Dendritic cell treated with granulocyte-macrophage colony-stimulating factor and Interleukin-4, amounts not matched to agents 40 ng/mL and 50 ng/mL, for 4 days (primary cell): ENCODE measurements at regions of chr1 and their contacts with region 1.

Region 1: GRCh38 chr1:27430903-27431600 is 38.6 kb downstream of the GPR3 start:
- H3K4me3 Mint-ChIP-seq: no peak overlapping the region
- H3K27ac Mint-ChIP-seq: peak overlapping the region; percentile 84
- H3K4me1 Mint-ChIP-seq: peaks cover 75% of the 10 kb centered on the region
- H3K27me3 Mint-ChIP-seq: no peaks in the 10 kb centered on the region

Region 2: GRCh38 chr1:27464926-27465647 is 34.0 kb after region 1 on chr1:
- intact Hi-C with region 1: loop called (anchors 5 kb)
- H3K4me3 Mint-ChIP-seq: no peak overlapping the region
- H3K27ac Mint-ChIP-seq: no peak overlapping the region
- H3K4me1 Mint-ChIP-seq: peaks cover 45% of the 10 kb centered on the region
- H3K27me3 Mint-ChIP-seq: no peaks in the 10 kb centered on the region

Region 3: DNA sequence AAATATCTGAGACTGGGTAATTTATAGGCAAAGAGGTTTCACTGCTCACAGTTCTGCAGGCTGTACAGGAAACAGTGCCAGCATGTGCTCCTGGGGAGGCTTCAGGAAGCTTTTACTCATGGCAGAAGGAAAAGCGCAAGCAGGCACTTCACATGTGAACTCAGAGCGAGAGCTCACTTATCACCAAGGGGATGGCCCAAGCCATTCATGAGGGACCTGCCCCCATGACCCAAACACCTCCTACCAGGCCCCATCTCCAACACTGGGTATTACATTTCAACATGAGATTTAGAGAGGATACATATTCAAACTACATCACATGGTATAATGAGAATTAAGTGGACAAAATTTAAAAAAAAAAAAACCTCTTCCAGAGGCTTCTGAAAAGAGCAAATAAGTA is 45.2 kb after region 1 on chr1:
- intact Hi-C with region 1: loop called (anchors 5 kb)
- H3K4me3 Mint-ChIP-seq: no peak overlapping the region
- H3K27ac Mint-ChIP-seq: no peak overlapping the region
- H3K4me1 Mint-ChIP-seq: peaks cover 85% of the 10 kb centered on the region
- H3K27me3 Mint-ChIP-seq: no peaks in the 10 kb centered on the region

Region 4: DNA sequence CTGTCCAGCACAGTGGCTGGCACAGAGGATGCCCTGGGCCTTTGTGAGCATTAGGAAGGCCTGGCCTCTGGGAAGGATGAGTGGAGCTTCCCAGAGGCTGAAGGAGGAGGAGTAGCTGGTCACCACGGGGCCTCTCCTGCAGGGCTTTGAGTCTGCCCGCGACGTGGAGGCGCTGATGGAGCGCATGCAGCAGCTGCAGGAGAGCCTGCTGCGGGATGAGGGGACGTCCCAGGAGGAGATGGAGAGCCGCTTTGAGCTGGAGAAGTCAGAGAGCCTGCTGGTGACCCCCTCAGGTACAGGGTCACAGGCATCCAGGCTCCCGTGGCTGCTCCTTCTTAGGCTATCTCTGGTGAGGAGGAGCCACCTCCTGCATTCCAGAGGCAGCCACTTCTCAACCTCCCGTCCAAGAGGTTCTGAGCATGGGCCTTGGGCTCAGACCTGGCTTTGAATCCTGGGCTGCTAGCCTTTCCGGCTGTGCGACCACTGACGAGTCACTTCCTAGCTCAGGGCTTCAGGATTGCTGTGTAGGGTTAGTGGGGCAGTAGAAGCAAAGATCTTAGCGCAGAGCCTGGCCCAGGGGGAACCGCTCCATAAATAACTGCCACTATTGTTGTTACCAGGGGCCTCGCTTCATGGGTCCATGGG is 842.3 kb after region 1 on chr1:
- intact Hi-C with region 1: no loop called
- H3K4me3 Mint-ChIP-seq: no peak overlapping the region
- H3K27ac Mint-ChIP-seq: no peak overlapping the region
- H3K4me1 Mint-ChIP-seq: peaks cover 4% of the 10 kb centered on the region
- H3K27me3 Mint-ChIP-seq: no peaks in the 10 kb centered on the region